ENCODE measurements at regions of chr20 and their contacts with region 1.

Region 1: GRCh38 chr20:49323622-49324238 is 45.9 kb upstream of the ZNFX1 start:
- DNase-seq: peak in 1 of 2 donors; percentile 16
- H3K4me3 ChIP-seq: no peak overlapping the region
- H3K27ac ChIP-seq: no peak overlapping the region
- H3K4me1 ChIP-seq: peaks cover 5 to 11% of the 10 kb centered on the region in 2 donors
- H3K27me3 ChIP-seq: peaks cover 2% of the 10 kb centered on the region
- CTCF ChIP-seq: peak in 2 of 3 experiments; percentile 14 to 32

Region 2: GRCh38 chr20:49230021-49230420 is 93.7 kb before region 1 on chr20:
- intact Hi-C with region 1: no loop called
- DNase-seq: no peak
- H3K4me3 ChIP-seq: no peak overlapping the region
- H3K27ac ChIP-seq: no peak overlapping the region
- H3K4me1 ChIP-seq: no peaks in the 10 kb centered on the region
- H3K27me3 ChIP-seq: no peaks in the 10 kb centered on the region
- CTCF ChIP-seq: no peak

Region 3: GRCh38 chr20:49245921-49246740 is 77.6 kb before region 1 on chr20:
- intact Hi-C with region 1: loop called (anchors 10 kb)
- DNase-seq: no peak
- H3K4me3 ChIP-seq: no peak overlapping the region
- H3K27ac ChIP-seq: peak overlapping the region in 1 of 2 donors; percentile 47
- H3K4me1 ChIP-seq: no peaks in the 10 kb centered on the region
- H3K27me3 ChIP-seq: no peaks in the 10 kb centered on the region
- CTCF ChIP-seq: peak; percentile 28 to 62 (median 36)

Region 4: DNA sequence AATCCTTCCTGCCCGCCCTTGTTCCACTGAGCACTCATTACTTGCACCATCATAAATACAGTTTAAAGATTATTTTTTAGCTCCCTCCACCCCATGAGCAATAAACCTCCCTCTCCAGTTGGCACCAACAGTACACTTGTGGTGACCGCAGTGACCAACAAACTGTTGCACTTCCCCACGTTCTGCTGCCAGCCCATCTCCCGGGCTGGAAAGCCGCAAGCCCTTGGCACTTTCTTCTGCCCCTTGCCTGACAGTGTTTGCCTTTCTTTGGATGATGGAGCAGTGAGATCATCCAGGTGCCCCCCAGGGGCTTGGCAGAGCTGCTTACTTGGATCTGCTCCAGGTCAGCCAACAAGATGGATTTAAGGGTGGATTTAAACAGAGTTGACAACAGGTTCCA is 137.2 kb after region 1 on chr20:
- intact Hi-C with region 1: no loop called
- DNase-seq: no peak
- H3K4me3 ChIP-seq: no peak overlapping the region
- H3K27ac ChIP-seq: no peak overlapping the region
- H3K4me1 ChIP-seq: no peaks in the 10 kb centered on the region
- H3K27me3 ChIP-seq: no peaks in the 10 kb centered on the region
- CTCF ChIP-seq: no peak